Activated CD4-positive, alpha-beta memory T cell treated with anti-CD3 and anti-CD28 coated beads, Interleukin-2, amount 10 ng/mL, durations not matched to agents 7 days and 5 days (primary cell): ENCODE measurements at regions of chr12 and their contacts with region 1.

Region 1: DNA sequence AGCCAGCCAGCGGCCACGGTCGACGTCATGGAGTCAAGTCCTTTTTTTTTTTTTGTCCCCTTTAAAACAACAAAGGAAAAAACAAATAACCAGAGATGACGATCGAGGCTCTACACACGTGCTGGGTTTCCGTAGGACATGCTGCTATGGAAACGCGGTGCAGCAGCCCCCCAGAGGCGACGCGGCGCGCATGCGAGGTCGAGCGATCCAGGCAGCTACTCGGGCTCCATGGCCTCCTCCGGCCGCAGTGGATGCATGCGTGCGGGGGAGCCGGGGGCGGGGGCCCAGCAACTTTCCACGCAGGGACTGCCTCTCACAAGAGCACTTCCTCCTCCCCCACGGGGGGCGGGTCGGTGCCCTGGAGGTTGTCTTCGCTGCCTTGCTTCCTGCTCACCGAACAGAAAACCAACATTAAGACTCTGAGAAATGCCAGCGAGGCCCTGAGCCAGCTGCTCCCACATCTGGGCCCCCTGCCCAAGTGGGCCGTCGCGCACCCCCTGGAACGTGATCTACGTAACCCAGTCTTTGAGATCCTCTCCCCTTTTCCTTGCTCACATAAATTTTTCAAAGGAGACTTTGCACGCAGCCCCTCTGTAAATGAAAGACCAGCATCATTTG is 30.7 kb downstream of the P2RX4 start:
- DNase-seq: peak; percentile 83
- H3K4me3 Mint-ChIP-seq: peak overlapping the region; percentile 43
- H3K27ac Mint-ChIP-seq: peak overlapping the region; percentile 78
- H3K4me1 Mint-ChIP-seq: peaks cover 43% of the 10 kb centered on the region
- H3K27me3 Mint-ChIP-seq: no peaks in the 10 kb centered on the region

Region 2: GRCh38 chr12:121230538-121230907 is 10.1 kb before region 1 on chr12:
- CTCF ChIA-PET with region 1: interaction called, 23 read pairs
- POLR2A ChIA-PET with region 1: interaction called, 22 read pairs
- DNase-seq: no peak
- H3K4me3 Mint-ChIP-seq: no peak overlapping the region
- H3K27ac Mint-ChIP-seq: peak overlapping the region; percentile 58
- H3K4me1 Mint-ChIP-seq: peaks cover 39% of the 10 kb centered on the region
- H3K27me3 Mint-ChIP-seq: no peaks in the 10 kb centered on the region

Region 3: GRCh38 chr12:121296618-121297434 is 56.2 kb after region 1 on chr12 and contains the start of gene CAMKK2:
- CTCF ChIA-PET with region 1: interaction called, 3 read pairs
- POLR2A ChIA-PET with region 1: interaction called, 10 read pairs
- DNase-seq: peak; percentile 90
- H3K4me3 Mint-ChIP-seq: peak within 1 kb of the TSS; percentile 88
- H3K27ac Mint-ChIP-seq: peak within 1 kb of the TSS; percentile 75
- H3K4me1 Mint-ChIP-seq: peaks cover 42% of the 10 kb centered on the region
- H3K27me3 Mint-ChIP-seq: peaks cover 1% of the 10 kb centered on the region
- total RNA-seq, gene CAMKK2: 27.6 to 29.1 TPM

Region 4: GRCh38 chr12:121383601-121384021 is 143.0 kb after region 1 on chr12:
- CTCF ChIA-PET with region 1: no interaction called
- POLR2A ChIA-PET with region 1: no interaction called
- DNase-seq: no peak
- H3K4me3 Mint-ChIP-seq: no peak overlapping the region
- H3K27ac Mint-ChIP-seq: no peak overlapping the region
- H3K4me1 Mint-ChIP-seq: peaks cover 4% of the 10 kb centered on the region
- H3K27me3 Mint-ChIP-seq: peaks cover 12% of the 10 kb centered on the region